ENCODE measurements at regions of chrX and their contacts with region 1.

Region 1: GRCh38 chrX:77910108-77910840 is at the start of gene ATP7A:
- DNase-seq: peak; percentile 86 to 89
- ATAC-seq: peak; percentile 94 to 99 (median 98)
- H3K4me3 ChIP-seq: peak within 1 kb of the TSS; percentile 30 to 73 (median 66)
- H3K27ac ChIP-seq: peak within 1 kb of the TSS in 9 of 10 donors; percentile 73 to 90 (median 85)
- H3K4me1 ChIP-seq: peaks cover 0 to 22% (median 8%) of the 10 kb centered on the region in 9 donors
- H3K27me3 ChIP-seq: no peaks in the 10 kb centered on the region
- CTCF ChIP-seq: peak in 8 of 9 donors; percentile 20 to 65 (median 53)
- total RNA-seq, gene ATP7A: 4.9 to 7.6 (median 6.5) TPM

Region 2: DNA sequence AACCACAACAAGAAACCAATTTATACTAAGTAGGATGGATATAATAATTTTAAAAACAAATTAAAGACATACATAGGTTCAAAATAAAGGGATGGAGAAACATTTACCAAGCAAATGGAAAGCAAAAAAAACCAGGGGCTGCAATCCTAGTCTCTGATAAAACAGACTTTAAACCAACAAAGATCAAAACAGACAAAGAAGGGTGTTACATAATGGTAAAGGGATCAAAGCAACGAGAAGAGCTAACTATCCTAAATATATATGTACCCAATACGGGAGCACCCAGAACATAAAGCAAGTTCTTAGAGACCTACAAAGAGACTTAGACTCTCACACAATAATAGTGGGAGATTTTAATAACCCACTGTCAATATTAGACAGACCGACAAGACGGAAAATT is 190.9 kb before region 1 on chrX:
- intact Hi-C with region 1: no loop called
- DNase-seq: no peak
- ATAC-seq: no peak
- H3K4me3 ChIP-seq: no peak overlapping the region
- H3K27ac ChIP-seq: no peak overlapping the region
- H3K4me1 ChIP-seq: no peaks in the 10 kb centered on the region
- H3K27me3 ChIP-seq: no peaks in the 10 kb centered on the region
- CTCF ChIP-seq: no peak

Region 3: DNA sequence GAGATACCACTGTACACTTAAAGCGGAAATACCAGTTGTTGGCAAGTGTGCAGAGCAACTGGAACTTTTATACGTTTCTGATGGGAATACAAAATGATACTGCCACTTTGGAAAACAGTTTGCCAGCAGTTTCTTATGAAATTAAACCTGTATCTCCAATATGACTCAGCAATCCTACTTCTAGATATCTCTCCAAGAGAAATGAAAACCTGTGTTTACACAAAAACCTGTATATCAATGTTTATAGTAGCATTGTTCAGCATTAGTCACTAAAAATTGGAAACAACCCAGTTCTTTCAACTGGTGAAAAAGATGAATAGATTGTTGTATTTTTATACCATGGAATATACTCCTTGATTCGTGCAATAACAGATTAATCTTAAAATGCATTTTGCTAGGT is 27.0 kb after region 1 on chrX:
- intact Hi-C with region 1: no loop called
- DNase-seq: no peak
- ATAC-seq: no peak
- H3K4me3 ChIP-seq: no peak overlapping the region
- H3K27ac ChIP-seq: no peak overlapping the region
- H3K4me1 ChIP-seq: peaks cover 0 to 6% (median 0%) of the 10 kb centered on the region in 9 donors
- H3K27me3 ChIP-seq: no peaks in the 10 kb centered on the region
- CTCF ChIP-seq: no peak

Region 4: GRCh38 chrX:78024349-78025108 is 114.3 kb after region 1 on chrX:
- intact Hi-C with region 1: loop called in 5 of 10 experiments (anchors 5 to 10 kb)
- DNase-seq: peak in 1 of 2 donors; percentile 8
- ATAC-seq: no peak
- H3K4me3 ChIP-seq: no peak overlapping the region
- H3K27ac ChIP-seq: no peak overlapping the region
- H3K4me1 ChIP-seq: no peaks in the 10 kb centered on the region
- H3K27me3 ChIP-seq: peaks cover 0 to 9% (median 0%) of the 10 kb centered on the region in 7 donors
- CTCF ChIP-seq: peak; percentile 12 to 59 (median 45)

Region 5: DNA sequence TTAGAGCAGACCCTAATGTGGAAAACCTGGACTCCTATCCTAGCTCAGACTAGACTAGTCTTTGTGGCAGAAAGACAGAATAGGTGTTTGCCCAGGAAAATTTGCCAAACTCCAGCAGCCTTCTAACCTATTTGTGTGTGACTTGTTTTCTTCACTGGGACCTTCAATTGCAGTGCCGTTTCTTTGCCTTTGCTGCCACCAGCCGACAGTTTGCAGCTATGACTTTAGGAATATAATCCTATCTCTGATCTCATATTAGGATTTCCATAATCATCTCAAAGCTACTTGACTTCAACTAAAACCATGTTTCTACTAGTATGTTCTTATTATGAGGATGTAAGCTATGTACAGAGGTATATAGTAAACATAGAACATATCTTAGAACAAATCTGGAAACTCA is 119.4 kb after region 1 on chrX:
- intact Hi-C with region 1: loop called in 5 of 10 experiments (anchors 5 to 10 kb)
- DNase-seq: peak in 1 of 2 donors; percentile 4
- ATAC-seq: peak in 1 of 8 donors; percentile 22
- H3K4me3 ChIP-seq: no peak overlapping the region
- H3K27ac ChIP-seq: no peak overlapping the region
- H3K4me1 ChIP-seq: no peaks in the 10 kb centered on the region
- H3K27me3 ChIP-seq: peaks cover 0 to 8% (median 0%) of the 10 kb centered on the region in 7 donors
- CTCF ChIP-seq: peak in 8 of 9 donors; percentile 19 to 55 (median 45)

Region 6: DNA sequence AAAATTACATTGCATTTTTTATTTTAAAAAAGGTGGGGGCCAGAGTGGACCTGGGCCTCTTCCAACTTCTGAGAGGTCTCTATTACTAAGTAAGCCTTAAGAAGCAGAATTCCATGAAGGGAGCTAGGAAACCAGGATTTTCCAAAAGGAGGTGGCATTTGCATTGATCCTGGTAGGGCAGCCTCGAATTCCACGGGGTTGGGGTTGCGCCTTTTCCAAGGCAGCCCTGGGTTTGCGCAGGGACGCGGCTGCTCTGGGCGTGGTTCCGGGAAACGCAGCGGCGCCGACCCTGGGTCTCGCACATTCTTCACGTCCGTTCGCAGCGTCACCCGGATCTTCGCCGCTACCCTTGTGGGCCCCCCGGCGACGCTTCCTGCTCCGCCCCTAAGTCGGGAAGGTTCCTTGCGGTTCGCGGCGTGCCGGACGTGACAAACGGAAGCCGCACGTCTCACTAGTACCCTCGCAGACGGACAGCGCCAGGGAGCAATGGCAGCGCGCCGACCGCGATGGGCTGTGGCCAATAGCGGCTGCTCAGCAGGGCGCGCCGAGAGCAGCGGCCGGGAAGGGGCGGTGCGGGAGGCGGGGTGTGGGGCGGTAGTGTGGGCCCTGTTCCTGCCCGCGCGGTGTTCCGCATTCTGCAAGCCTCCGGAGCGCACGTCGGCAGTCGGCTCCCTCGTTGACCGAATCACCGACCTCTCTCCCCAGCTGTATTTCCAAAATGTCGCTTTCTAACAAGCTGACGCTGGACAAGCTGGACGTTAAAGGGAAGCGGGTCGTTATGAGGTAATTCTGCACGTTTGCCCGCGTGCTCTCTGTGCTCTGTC is 193.6 kb after region 1 on chrX and contains the start of gene PGK1:
- intact Hi-C with region 1: loop called in 4 of 10 experiments (anchors 5 to 10 kb)
- DNase-seq: peak; percentile 95 to 96
- ATAC-seq: peak; percentile 97 to 99 (median 98)
- H3K4me3 ChIP-seq: peak within 1 kb of the TSS; percentile 51 to 91 (median 82)
- H3K27ac ChIP-seq: peak within 1 kb of the TSS; percentile 75 to 97 (median 96)
- H3K4me1 ChIP-seq: peaks cover 0 to 38% (median 29%) of the 10 kb centered on the region in 9 donors
- H3K27me3 ChIP-seq: peaks cover 0 to 9% (median 0%) of the 10 kb centered on the region in 7 donors
- CTCF ChIP-seq: no peak
- total RNA-seq, gene PGK1: 414 to 824 (median 460) TPM